ENCODE measurements at regions of chr18 and their contacts with region 1.

Region 1: DNA sequence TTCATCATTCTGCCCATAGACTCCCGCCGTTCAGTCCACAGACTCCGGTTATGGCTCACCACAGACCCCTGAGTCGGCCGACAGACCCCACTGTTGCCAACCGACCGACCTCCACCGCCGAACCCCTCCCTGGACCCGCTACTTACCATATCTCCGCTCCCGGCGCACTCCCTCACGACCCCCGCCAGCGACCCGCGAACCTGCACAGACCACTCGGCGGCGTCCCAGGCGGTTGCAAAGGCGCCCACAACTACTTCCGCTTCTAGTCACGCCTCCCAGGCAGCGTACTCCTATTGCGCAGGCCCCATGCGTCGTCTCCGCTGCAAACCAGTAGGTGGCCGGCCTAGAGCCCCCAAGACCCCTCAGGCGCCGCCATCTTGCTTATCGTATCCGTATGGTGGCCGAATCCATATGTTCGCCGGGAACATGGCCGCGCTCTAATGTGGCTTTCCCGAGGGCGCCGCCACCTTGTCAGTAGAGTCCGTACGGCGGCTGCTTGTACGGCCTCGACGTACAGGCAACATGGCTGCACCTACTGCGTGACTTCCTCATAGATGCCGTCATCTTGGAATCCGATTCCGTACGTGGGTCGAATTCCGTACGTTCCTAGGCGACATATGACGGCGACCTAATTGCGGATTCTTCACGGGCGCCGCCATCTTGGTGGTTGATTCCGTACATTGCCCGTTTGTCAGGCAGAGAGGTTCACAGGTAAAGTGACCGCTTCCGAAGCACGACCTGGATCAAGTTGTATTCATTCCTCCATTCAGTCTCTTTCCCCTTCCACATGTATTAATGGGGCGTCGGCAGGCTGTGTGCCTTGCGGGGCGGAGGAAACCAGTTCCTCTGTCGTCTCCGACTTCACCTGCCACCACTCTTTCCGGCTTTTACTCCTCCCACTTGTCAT is at the start of gene CXXC1:
- DNase-seq: peak; percentile 97
- ATAC-seq: peak; percentile 94 to 97 (median 96)
- H3K4me3 ChIP-seq: peak within 1 kb of the TSS; percentile 60 to 94 (median 70)
- H3K27ac ChIP-seq: peak within 1 kb of the TSS; percentile 61 to 91 (median 86)
- H3K4me1 ChIP-seq: peaks cover 0 to 22% (median 11%) of the 10 kb centered on the region in 9 donors
- H3K27me3 ChIP-seq: peaks cover 0 to 2% (median 0%) of the 10 kb centered on the region in 7 donors
- CTCF ChIP-seq: peak; percentile 17 to 68 (median 49)
- total RNA-seq, gene CXXC1: 22.1 to 49.6 (median 26.3) TPM

Region 2: DNA sequence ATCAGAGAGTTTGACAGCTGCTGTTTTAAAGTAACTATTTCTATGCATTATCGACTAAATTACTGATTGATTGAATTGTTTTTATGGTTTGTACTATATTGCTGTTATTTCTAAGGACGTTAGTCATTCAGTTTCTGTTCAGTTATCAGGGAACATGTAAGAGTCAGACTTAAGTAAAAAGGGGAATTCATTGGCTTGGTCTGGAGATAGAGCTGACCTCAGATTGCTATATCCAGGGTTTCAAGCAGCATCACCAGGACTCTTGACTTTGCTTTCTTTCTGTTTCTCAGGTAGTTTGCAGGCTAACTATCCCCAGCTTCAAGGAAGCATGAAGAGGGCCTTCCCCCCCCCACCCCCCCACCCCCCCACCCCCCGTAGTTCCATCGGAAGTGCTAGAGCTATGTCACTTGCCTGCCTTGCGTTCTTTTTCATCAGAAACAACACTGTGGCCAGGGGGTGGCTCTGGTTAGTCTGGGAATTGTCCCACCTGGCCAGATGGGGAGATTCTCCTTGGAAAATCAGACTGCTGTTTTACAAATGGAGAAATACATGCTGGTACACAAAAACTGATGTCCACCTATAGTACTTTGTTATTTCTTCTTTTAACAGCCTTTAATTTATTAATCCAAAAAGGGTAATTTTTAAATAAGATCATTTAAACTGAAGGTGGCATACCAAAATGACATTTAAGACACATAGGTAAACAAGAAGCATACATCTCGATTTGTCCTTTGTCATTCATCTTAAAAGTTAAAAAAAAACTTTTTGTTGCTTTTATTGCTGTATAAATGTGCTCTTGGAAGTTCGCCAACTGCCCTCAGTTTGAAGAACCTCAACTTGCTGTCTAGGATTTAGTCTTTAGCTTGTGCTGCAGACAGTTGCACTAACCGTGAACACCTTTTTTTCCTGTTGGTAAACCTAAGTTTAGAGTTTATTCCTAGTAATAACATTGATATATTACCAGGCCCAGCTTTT is 751.7 kb after region 1 on chr18:
- intact Hi-C with region 1: loop called in 1 of 10 experiments (anchors 10 kb)
- DNase-seq: no peak
- ATAC-seq: no peak
- H3K4me3 ChIP-seq: no peak overlapping the region
- H3K27ac ChIP-seq: no peak overlapping the region
- H3K4me1 ChIP-seq: peaks cover 10 to 99% (median 94%) of the 10 kb centered on the region in 9 donors
- H3K27me3 ChIP-seq: no peaks in the 10 kb centered on the region
- CTCF ChIP-seq: no peak